ENCODE measurements at regions of chr11 and their contacts with region 1.

Region 1: GRCh38 chr11:72598906-72599305 is 75.3 kb downstream of the PDE2A start:
- DNase-seq: peak in 1 of 2 experiments; percentile 70
- H3K4me3 ChIP-seq: no peak overlapping the region
- H3K27ac ChIP-seq: no peak overlapping the region
- H3K4me1 ChIP-seq: peaks cover 5 to 26% (median 20%) of the 10 kb centered on the region in 4 experiments
- H3K27me3 ChIP-seq: peaks cover 0 to 14% (median 3%) of the 10 kb centered on the region in 4 experiments; a peak in 4 of 7 replicates
- CTCF ChIP-seq: peak; percentile 82 to 86 (median 83)
- EP300 ChIP-seq: no peak
- POLR2A ChIP-seq: no peak
- RAD21 ChIP-seq: peak; percentile 68 to 78

Region 2: GRCh38 chr11:72308226-72309073 is 290.5 kb before region 1 on chr11:
- CTCF ChIA-PET with region 1: no interaction called
- POLR2A ChIA-PET with region 1: no interaction called
- DNase-seq: no peak
- H3K4me3 ChIP-seq: no peak overlapping the region
- H3K27ac ChIP-seq: no peak overlapping the region
- H3K4me1 ChIP-seq: no peaks in the 10 kb centered on the region
- H3K27me3 ChIP-seq: no peaks in the 10 kb centered on the region
- CTCF ChIP-seq: no peak
- EP300 ChIP-seq: no peak
- POLR2A ChIP-seq: no peak
- RAD21 ChIP-seq: no peak

Region 3: DNA sequence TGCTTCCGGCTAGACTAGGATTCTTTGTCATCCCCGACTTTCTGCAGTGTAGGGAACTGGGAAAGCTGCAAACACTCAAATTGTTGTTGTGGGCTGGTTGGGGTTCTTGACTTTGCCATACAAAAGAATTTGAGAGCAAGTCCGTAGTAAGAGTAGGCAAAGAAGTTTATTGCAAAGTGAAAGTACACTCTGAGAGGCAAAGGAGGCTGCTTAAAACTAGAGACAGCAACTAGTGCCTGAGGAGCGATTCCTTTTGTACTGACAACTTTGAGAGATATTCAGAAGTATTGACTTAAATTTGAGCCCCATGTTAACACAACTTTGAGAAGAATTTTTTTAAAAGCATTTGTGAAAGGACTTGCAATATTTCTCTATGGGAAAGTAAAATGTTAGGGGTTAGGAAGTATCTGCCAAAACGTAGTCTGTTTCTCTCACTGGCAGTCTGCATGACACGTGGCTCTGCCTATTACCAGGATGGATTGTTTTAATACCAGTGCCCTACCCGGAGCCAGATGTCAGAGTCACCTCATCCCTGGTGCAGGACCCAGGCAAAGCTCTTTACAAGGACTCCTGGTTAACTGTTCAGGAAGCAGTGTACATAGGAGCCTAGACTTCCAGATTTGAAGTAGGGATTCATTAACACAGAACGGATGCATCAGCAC is 79.6 kb before region 1 on chr11:
- CTCF ChIA-PET with region 1: no interaction called
- POLR2A ChIA-PET with region 1: no interaction called
- DNase-seq: no peak
- H3K4me3 ChIP-seq: no peak overlapping the region
- H3K27ac ChIP-seq: no peak overlapping the region
- H3K4me1 ChIP-seq: no peaks in the 10 kb centered on the region
- H3K27me3 ChIP-seq: no peaks in the 10 kb centered on the region; a peak in 1 of 7 replicates
- CTCF ChIP-seq: no peak
- EP300 ChIP-seq: no peak
- POLR2A ChIP-seq: no peak
- RAD21 ChIP-seq: no peak

Region 4: DNA sequence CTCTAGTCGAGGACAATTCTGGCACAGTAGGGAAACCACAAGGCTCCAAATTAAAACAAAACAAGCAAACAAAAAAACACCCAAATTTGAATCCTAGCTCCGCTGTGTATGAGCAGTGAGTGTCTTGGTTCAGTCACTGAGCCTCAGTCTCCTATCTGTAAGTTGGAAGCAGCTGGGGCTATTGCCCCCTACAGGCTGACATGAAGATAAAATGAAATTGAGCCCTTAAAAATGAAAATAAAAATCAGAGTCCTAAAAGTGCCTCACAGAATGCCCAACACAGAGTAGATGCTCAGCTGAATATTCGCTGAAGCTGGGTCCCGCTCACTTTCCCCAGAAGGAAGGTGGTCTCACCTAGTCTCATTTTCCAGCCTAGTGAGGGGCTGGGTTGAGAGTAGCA is 10.1 kb after region 1 on chr11:
- CTCF ChIA-PET with region 1: interaction called, 61 read pairs
- POLR2A ChIA-PET with region 1: interaction called, 3 read pairs
- DNase-seq: no peak
- H3K4me3 ChIP-seq: no peak overlapping the region
- H3K27ac ChIP-seq: no peak overlapping the region
- H3K4me1 ChIP-seq: no peaks in the 10 kb centered on the region
- H3K27me3 ChIP-seq: no peaks in the 10 kb centered on the region; a peak in 1 of 7 replicates
- CTCF ChIP-seq: peak in 2 of 3 experiments; percentile 55 to 58; a peak in 3 of 4 replicates
- EP300 ChIP-seq: no peak
- POLR2A ChIP-seq: no peak
- RAD21 ChIP-seq: peak in 1 of 2 experiments; percentile 39; a peak in 1 of 4 replicates

Region 5: GRCh38 chr11:72614381-72614780 is 15.5 kb after region 1 on chr11:
- CTCF ChIA-PET with region 1: interaction called, 624 read pairs
- POLR2A ChIA-PET with region 1: interaction called, 5 read pairs
- DNase-seq: no peak
- H3K4me3 ChIP-seq: no peak overlapping the region
- H3K27ac ChIP-seq: no peak overlapping the region
- H3K4me1 ChIP-seq: peaks cover 0 to 5% (median 1%) of the 10 kb centered on the region in 4 experiments; a peak in 1 of 7 replicates
- H3K27me3 ChIP-seq: no peaks in the 10 kb centered on the region; a peak in 1 of 7 replicates
- CTCF ChIP-seq: no peak
- EP300 ChIP-seq: no peak
- POLR2A ChIP-seq: no peak
- RAD21 ChIP-seq: no peak

Region 6: GRCh38 chr11:72871119-72871518 is 272.2 kb after region 1 on chr11:
- CTCF ChIA-PET with region 1: no interaction called
- POLR2A ChIA-PET with region 1: no interaction called
- DNase-seq: no peak
- H3K4me3 ChIP-seq: no peak overlapping the region
- H3K27ac ChIP-seq: no peak overlapping the region
- H3K4me1 ChIP-seq: no peaks in the 10 kb centered on the region
- H3K27me3 ChIP-seq: no peaks in the 10 kb centered on the region
- CTCF ChIP-seq: no peak
- EP300 ChIP-seq: no peak
- POLR2A ChIP-seq: no peak
- RAD21 ChIP-seq: no peak